KBM-7 (cell line): ENCODE measurements at regions of chr17 and their contacts with region 1.

Region 1: GRCh38 chr17:73359987-73360410 is 48.2 kb upstream of the CDC42EP4 start:
- DNase-seq: no peak

Region 2: DNA sequence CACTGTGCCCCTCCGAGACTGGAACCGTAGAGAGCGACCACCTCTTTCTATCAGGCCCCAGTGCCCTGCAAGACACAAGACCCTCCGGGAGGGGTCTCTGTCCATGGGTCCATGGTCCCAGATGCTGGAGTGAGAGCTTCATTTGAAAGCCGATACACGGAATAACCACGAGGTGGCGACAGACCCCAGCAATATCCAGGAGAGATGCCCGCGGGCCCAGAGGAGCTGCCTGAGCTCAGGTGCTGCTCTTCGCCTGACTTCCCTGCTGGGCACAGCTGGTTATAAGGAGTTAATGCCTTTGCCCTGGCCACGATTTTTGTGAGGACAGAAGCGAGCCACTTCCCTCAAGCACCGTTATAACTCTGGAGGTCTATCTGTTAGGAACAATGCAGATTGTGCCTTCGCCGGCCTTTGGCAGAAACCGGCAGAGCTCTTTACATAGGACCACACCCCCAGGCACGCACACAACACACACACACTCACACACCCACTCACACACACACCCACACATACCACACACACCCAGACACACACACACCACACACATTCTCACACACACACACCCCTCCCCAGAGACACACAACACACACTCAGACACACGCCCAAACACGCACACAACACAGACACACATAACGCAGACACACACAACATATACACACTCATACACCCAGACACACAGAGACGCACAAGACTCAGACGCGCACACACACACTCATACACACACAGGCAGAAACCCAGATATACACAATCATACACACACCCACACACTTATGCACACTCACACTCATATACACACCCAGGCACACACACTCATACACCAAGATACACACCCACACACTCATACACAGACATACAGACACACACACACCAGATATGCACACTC is 802.8 kb before region 1 on chr17:
- in situ Hi-C with region 1: loop called (anchors 25 kb)
- DNase-seq: peak; percentile 74

Region 3: GRCh38 chr17:72725433-72726068 is 634.4 kb before region 1 on chr17:
- in situ Hi-C with region 1: loop called (anchors 25 kb)
- DNase-seq: peak; percentile 57

Region 4: GRCh38 chr17:73255671-73256181 is 104.3 kb before region 1 on chr17:
- in situ Hi-C with region 1: loop called (anchors 25 kb)
- DNase-seq: peak; percentile 64

Region 5: GRCh38 chr17:73625991-73626673 is 266.1 kb after region 1 on chr17:
- in situ Hi-C with region 1: no loop called
- DNase-seq: no peak